Activated CD4-positive, alpha-beta T cell treated with anti-CD3 and anti-CD28 coated beads for 36 hours (primary cell): ENCODE measurements at regions of chr4 and their contacts with region 1.

Region 1: GRCh38 chr4:145829629-145830395 is 108.8 kb downstream of the ZNF827 start:
- DNase-seq: peak; percentile 68
- ATAC-seq: peak; percentile 68
- H3K4me3 Mint-ChIP-seq: peak overlapping the region; percentile 43
- H3K27ac Mint-ChIP-seq: peak overlapping the region; percentile 77
- H3K4me1 Mint-ChIP-seq: peaks cover 44% of the 10 kb centered on the region
- H3K27me3 Mint-ChIP-seq: no peaks in the 10 kb centered on the region

Region 2: DNA sequence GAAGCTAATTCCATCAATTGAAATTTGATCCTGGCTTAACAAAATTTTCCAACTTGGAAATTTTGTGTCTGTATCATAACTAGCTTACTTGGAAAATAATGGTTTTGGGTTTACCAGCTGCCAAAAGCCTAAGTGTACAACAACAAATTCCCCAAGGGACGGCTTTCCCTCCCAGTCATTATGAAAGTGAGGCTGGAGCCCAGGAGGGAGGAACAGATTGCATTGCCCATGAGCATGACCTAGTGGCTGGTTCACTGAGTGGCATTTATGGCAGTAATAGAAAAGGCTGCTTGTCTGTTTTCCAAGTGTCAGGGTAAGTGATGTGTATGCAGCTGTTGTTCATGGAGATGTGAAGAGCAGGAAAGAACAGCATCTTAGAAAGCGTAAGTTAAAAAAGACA is 1254.6 kb before region 1 on chr4:
- CTCF ChIA-PET with region 1: no interaction called
- POLR2A ChIA-PET with region 1: no interaction called
- intact Hi-C with region 1: no loop called
- DNase-seq: no peak
- ATAC-seq: no peak
- H3K4me3 Mint-ChIP-seq: no peak overlapping the region
- H3K27ac Mint-ChIP-seq: no peak overlapping the region
- H3K4me1 Mint-ChIP-seq: no peaks in the 10 kb centered on the region
- H3K27me3 Mint-ChIP-seq: no peaks in the 10 kb centered on the region

Region 3: DNA sequence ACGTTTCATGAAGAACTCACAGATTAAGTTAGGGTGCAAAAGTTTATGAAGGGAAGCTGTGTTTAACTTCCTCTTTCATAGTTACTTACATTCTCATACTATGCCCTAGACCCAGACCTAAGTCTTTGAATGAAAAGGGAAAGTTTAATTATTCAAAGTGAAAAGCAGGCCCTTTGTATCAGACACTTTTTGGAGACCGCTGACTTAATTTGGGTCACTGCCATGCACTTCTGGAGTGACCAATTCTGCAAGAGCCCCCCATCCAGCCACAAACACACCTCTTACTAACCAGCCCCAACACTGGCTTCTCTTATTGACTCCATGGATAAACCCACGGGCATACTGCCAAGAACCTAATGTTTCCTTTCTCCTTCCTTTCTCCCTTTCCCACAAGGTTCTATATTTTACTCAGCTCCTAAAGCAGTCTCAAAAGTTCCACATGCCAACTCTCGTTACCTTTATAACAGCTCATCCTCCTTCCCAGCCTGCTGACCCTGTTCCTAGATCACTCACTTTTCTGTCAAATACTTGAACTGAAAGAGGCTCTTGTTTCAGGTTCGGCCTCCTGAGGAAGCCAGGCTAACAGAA is 697.2 kb before region 1 on chr4:
- CTCF ChIA-PET with region 1: no interaction called
- POLR2A ChIA-PET with region 1: no interaction called
- intact Hi-C with region 1: no loop called
- DNase-seq: peak; percentile 48
- ATAC-seq: peak; percentile 63
- H3K4me3 Mint-ChIP-seq: no peak overlapping the region
- H3K27ac Mint-ChIP-seq: peak overlapping the region; percentile 68
- H3K4me1 Mint-ChIP-seq: peaks cover 45% of the 10 kb centered on the region
- H3K27me3 Mint-ChIP-seq: no peaks in the 10 kb centered on the region

Region 4: GRCh38 chr4:145299380-145300076 is 530.3 kb before region 1 on chr4:
- CTCF ChIA-PET with region 1: no interaction called
- POLR2A ChIA-PET with region 1: no interaction called
- intact Hi-C with region 1: loop called in 1 of 2 experiments (anchors 10 kb)
- DNase-seq: peak; percentile 90
- ATAC-seq: peak; percentile 97
- H3K4me3 Mint-ChIP-seq: no peak overlapping the region
- H3K27ac Mint-ChIP-seq: no peak overlapping the region
- H3K4me1 Mint-ChIP-seq: peaks cover 20% of the 10 kb centered on the region
- H3K27me3 Mint-ChIP-seq: peaks cover 8% of the 10 kb centered on the region

Region 5: GRCh38 chr4:145719752-145720624 is 109.8 kb before region 1 on chr4:
- CTCF ChIA-PET with region 1: interaction called, 3 read pairs
- POLR2A ChIA-PET with region 1: interaction called, 3 read pairs
- intact Hi-C with region 1: loop called in 1 of 2 experiments (anchors 2 kb)
- DNase-seq: peak; percentile 76
- ATAC-seq: peak; percentile 90
- H3K4me3 Mint-ChIP-seq: peak overlapping the region; percentile 12
- H3K27ac Mint-ChIP-seq: peak overlapping the region; percentile 67
- H3K4me1 Mint-ChIP-seq: peaks cover 15% of the 10 kb centered on the region
- H3K27me3 Mint-ChIP-seq: peaks cover 22% of the 10 kb centered on the region

Region 6: GRCh38 chr4:145732895-145733880 is 96.6 kb before region 1 on chr4:
- CTCF ChIA-PET with region 1: no interaction called
- POLR2A ChIA-PET with region 1: no interaction called
- intact Hi-C with region 1: loop called in 1 of 2 experiments (anchors 2 kb)
- DNase-seq: peak; percentile 92
- ATAC-seq: peak; percentile 92
- H3K4me3 Mint-ChIP-seq: peak overlapping the region; percentile 65
- H3K27ac Mint-ChIP-seq: peak overlapping the region; percentile 56
- H3K4me1 Mint-ChIP-seq: peaks cover 23% of the 10 kb centered on the region
- H3K27me3 Mint-ChIP-seq: no peaks in the 10 kb centered on the region